Naive thymus-derived CD8-positive, alpha-beta T cell (primary cell): ENCODE measurements at regions of chr12 and their contacts with region 1.

Region 1: DNA sequence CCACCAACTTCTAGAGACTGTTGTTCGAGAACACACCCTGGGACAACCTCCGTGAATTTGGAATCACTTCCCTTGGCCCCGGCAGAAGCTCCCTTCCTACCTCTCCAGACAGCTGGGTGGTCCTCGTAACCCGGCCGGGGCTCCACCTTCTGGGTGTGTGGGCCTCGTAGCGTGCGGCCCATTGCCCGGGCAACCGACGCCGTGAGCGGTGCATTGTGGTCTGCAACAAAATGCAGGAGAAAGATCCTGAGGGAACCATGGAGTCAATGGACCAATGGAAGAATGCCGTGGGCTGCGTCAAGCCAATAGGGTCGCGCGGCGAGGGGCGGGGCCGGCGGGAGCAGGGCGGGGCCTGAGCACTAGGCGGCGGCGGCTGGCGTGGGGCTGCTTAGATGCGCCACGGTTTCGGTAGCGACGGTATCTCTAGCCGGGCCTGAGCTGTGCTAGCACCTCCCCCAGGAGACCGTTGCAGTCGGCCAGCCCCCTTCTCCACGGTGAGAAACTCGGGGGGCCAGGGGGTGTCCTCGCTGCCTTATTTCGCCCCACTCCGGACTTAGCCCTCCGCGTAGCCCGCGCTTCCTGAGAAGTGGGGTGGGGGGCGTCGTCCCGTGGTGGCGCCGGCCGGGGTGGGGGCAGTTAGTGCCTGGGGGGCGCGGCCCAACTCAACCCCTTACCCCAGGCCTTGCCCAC is at the start of gene DYNLL1:
- DNase-seq: peak; percentile 95 to 100 (median 98)
- ATAC-seq: peak; percentile 91 to 95
- H3K4me3 Mint-ChIP-seq: peak within 1 kb of the TSS; percentile 83 to 98 (median 94)
- H3K27ac Mint-ChIP-seq: peak within 1 kb of the TSS; percentile 58 to 96 (median 94)
- H3K4me1 Mint-ChIP-seq: peaks cover 13 to 37% (median 25%) of the 10 kb centered on the region in 4 donors
- H3K27me3 Mint-ChIP-seq: peaks cover 0 to 2% (median 0%) of the 10 kb centered on the region in 5 donors
- polyA plus RNA-seq, gene DYNLL1: 156 to 192 (median 179) TPM

Region 2: DNA sequence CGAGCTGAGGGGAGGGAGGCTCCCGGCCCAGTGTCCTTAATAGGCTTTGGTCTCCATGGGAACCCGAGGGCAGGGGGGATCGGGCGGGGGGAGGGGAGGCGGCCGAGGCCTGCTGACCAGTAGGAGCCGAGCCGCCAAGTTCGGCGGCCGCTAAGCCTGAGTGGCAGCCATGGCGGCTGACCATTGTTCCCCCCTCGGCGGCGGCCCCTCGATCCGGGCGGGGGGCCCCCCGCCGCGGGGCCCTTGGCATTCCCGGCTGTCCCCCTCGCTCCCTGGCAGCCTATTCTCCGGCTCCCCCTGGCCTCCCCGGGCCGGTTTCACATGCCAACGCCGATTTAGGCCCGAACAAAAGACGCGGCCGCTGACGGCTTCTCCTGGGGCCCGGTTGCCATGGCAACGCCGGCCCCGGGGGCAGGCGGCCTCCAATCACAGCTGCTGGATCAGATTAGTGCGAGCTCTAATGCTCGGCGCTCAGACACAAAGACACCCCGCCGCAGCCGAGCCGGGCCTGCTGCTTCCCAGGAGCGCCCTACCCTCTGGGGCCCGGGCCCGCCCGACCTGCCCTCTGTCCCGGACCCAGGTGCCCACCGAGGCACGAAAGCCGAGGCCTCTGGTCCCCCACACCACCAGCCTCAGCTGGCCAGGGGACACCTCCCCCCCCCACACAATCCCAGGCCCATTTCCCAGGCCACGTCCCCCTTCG is 134.2 kb before region 1 on chr12:
- POLR2A ChIA-PET with region 1: no interaction called
- DNase-seq: peak in 6 of 10 donors; percentile 8 to 38 (median 24)
- ATAC-seq: peak; percentile 68 to 70
- H3K4me3 Mint-ChIP-seq: peak overlapping the region in 5 of 10 donors; percentile 10 to 67 (median 26)
- H3K27ac Mint-ChIP-seq: peak overlapping the region in 1 of 10 donors; percentile 84
- H3K4me1 Mint-ChIP-seq: peaks cover 7 to 11% (median 7%) of the 10 kb centered on the region in 4 donors
- H3K27me3 Mint-ChIP-seq: peaks cover 33 to 95% (median 67%) of the 10 kb centered on the region in 5 donors

Region 3: GRCh38 chr12:120528861-120529525 is 33.1 kb after region 1 on chr12 and contains the start of gene COQ5:
- POLR2A ChIA-PET with region 1: interaction called, 10 read pairs
- DNase-seq: peak; percentile 69 to 89 (median 81)
- ATAC-seq: peak; percentile 96 to 97
- H3K4me3 Mint-ChIP-seq: peak within 1 kb of the TSS; percentile 97 to 100 (median 100)
- H3K27ac Mint-ChIP-seq: peak within 1 kb of the TSS; percentile 98 to 100 (median 99)
- H3K4me1 Mint-ChIP-seq: peaks cover 10 to 32% (median 20%) of the 10 kb centered on the region in 4 donors
- H3K27me3 Mint-ChIP-seq: no peaks in the 10 kb centered on the region
- polyA plus RNA-seq, gene COQ5: 32.8 to 49.1 (median 39.1) TPM

Region 4: GRCh38 chr12:120588948-120589930 is 93.4 kb after region 1 on chr12:
- POLR2A ChIA-PET with region 1: no interaction called
- DNase-seq: no peak
- ATAC-seq: no peak
- H3K4me3 Mint-ChIP-seq: no peak overlapping the region
- H3K27ac Mint-ChIP-seq: peak overlapping the region in 1 of 10 donors; percentile 37
- H3K4me1 Mint-ChIP-seq: peaks cover 0 to 2% (median 1%) of the 10 kb centered on the region in 4 donors
- H3K27me3 Mint-ChIP-seq: peaks cover 0 to 4% (median 0%) of the 10 kb centered on the region in 5 donors